Sigmoid colon (tissue), 7 donors: ENCODE measurements at regions of chr3 and their contacts with region 1.

Region 1: DNA sequence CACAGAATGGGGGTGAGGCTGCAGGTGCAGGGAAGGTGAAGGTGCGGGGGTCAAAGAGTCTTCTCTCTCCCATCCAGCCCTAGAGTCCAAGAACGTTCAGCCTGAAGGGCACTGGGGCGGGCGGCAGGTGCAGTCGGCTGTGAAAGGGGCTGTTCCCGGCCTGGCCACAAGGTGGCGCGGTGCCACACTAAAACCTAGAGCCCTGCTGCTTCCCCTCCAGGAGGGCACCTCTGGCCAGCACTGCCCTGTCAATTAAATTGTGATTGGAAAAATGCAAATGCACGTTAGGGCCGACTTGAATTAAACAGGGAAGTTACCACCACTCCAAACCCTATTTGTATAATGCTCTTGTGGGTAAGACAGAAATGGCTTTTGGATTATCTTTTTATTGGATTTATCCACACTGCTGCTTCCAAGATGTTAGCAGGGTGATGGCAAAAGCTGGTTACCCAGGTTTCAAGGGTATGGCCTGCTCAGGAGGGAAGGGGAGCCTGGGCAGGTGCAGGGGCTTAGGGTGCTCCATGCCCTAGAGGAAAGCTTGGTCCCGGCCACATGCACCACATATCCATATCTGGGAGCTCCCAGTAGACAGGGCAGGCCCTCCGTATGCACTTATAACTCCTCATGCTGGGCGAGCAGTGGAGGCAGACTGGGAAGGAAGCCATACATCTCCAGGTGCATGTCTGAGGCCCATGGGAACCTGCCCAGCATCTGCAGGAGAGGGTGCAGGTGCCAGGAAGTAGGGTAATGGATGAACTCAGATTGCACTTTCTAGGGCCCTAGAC is 119.8 kb downstream of the ADCY5 start:
- DNase-seq: peak; percentile 90
- H3K4me3 ChIP-seq: no peak overlapping the region
- H3K27ac ChIP-seq: peak overlapping the region; percentile 76 to 87 (median 83)
- H3K4me1 ChIP-seq: peaks cover 0 to 59% (median 55%) of the 10 kb centered on the region in 4 donors
- H3K27me3 ChIP-seq: no peaks in the 10 kb centered on the region
- CTCF ChIP-seq: peak; percentile 92 to 97 (median 96)
- EP300 ChIP-seq: no peak
- POLR2A ChIP-seq: no peak

Region 2: GRCh38 chr3:123373474-123373987 is 44.5 kb after region 1 on chr3:
- intact Hi-C with region 1: loop called (anchors 5 kb)
- DNase-seq: peak; percentile 94
- H3K4me3 ChIP-seq: no peak overlapping the region
- H3K27ac ChIP-seq: peak overlapping the region; percentile 68 to 91 (median 82)
- H3K4me1 ChIP-seq: peaks cover 0 to 92% (median 84%) of the 10 kb centered on the region in 4 donors
- H3K27me3 ChIP-seq: no peaks in the 10 kb centered on the region
- CTCF ChIP-seq: no peak
- EP300 ChIP-seq: peak in 3 of 4 donors; percentile 50 to 55 (median 54)
- POLR2A ChIP-seq: no peak

Region 3: GRCh38 chr3:123489400-123490004 is 160.5 kb after region 1 on chr3:
- intact Hi-C with region 1: loop called (anchors 1 kb)
- DNase-seq: peak; percentile 85
- H3K4me3 ChIP-seq: no peak overlapping the region
- H3K27ac ChIP-seq: peak overlapping the region; percentile 28 to 67 (median 64)
- H3K4me1 ChIP-seq: peaks cover 0 to 13% (median 9%) of the 10 kb centered on the region in 4 donors
- H3K27me3 ChIP-seq: no peaks in the 10 kb centered on the region
- CTCF ChIP-seq: peak; percentile 84 to 87 (median 86)
- EP300 ChIP-seq: no peak
- POLR2A ChIP-seq: no peak

Region 4: DNA sequence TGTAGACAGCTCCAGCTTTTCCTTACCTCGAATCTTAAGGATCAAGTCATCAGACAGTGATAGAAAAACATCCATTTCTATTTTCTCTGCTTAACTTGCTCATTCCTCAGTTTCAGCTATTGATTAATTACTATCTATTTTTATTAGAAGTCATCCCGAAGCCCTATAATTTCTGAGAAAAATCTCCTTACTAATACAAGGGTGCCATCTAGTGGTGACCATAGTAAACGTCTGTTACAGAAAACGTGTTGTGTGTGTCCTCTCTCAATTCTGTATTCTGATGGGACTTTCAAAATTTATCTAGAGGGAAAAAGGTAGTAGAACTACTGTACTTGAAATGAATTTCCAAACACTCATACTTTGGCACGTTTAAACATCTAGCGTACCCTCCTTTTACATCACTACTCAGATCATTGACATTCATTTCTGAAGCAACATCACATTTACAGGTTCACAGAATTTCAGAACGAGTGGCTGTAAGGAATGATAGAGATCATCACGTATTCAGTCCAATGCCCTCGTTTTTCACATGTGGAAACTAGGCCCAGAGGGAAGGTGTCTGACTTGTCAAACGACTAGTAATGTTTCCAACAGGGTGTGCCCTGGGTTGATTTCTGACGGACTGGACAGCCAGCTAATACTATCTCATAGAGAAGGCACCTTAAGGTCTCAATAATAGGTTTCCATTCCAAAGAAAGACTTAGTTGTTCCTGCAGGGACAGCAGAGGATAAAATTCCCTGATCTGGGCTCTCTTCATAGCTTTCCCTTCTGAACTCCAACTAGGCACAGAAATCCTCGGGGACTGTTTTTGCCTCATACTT is 230.2 kb after region 1 on chr3:
- intact Hi-C with region 1: loop called (anchors 2 kb)
- DNase-seq: no peak
- H3K4me3 ChIP-seq: no peak overlapping the region
- H3K27ac ChIP-seq: no peak overlapping the region
- H3K4me1 ChIP-seq: peaks cover 0 to 4% (median 2%) of the 10 kb centered on the region in 4 donors
- H3K27me3 ChIP-seq: no peaks in the 10 kb centered on the region
- CTCF ChIP-seq: peak; percentile 48 to 85 (median 64)
- EP300 ChIP-seq: no peak
- POLR2A ChIP-seq: no peak